CD8-positive, alpha-beta T cell (primary cell): ENCODE measurements at regions of chr3 and their contacts with region 1.

Region 1: GRCh38 chr3:105938101-105938500 is 69.3 kb upstream of the CBLB start:
- DNase-seq: no peak
- ATAC-seq: no peak
- H3K4me3 ChIP-seq: no peak overlapping the region
- H3K4me3 Mint-ChIP-seq: no peak overlapping the region
- H3K27ac ChIP-seq: no peak overlapping the region
- H3K27ac Mint-ChIP-seq: no peak overlapping the region
- H3K4me1 ChIP-seq: no peaks in the 10 kb centered on the region
- H3K4me1 Mint-ChIP-seq: peaks cover 2% of the 10 kb centered on the region
- H3K27me3 ChIP-seq: no peaks in the 10 kb centered on the region
- H3K27me3 Mint-ChIP-seq: no peaks in the 10 kb centered on the region
- CTCF ChIP-seq: no peak

Region 2: GRCh38 chr3:104961851-104962250 is 976.2 kb before region 1 on chr3:
- CTCF ChIA-PET with region 1: no interaction called
- POLR2A ChIA-PET with region 1: no interaction called
- intact Hi-C with region 1: no loop called
- DNase-seq: no peak
- ATAC-seq: no peak
- H3K4me3 ChIP-seq: no peak overlapping the region
- H3K4me3 Mint-ChIP-seq: no peak overlapping the region
- H3K27ac ChIP-seq: no peak overlapping the region
- H3K27ac Mint-ChIP-seq: no peak overlapping the region
- H3K4me1 ChIP-seq: no peaks in the 10 kb centered on the region
- H3K4me1 Mint-ChIP-seq: no peaks in the 10 kb centered on the region
- H3K27me3 ChIP-seq: no peaks in the 10 kb centered on the region
- H3K27me3 Mint-ChIP-seq: no peaks in the 10 kb centered on the region
- CTCF ChIP-seq: no peak

Region 3: DNA sequence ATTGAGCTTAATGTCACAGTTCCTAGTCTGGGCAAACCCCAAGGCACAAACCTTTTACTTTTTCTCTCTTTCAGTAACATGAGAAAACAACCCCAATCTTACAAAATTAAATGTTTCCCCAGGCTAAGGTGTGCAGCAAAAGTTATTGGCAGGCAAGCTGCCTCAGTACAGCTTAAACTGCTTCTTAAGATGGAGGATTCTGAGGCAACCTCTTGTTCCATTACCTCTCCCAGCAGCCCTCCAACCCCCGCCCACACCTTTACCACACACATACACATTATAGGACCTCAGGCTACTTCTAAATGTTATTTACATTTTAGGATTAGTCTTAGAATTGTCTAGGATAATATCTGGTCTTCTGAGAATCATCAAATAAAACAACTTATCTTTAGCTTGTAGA is 47.0 kb before region 1 on chr3:
- CTCF ChIA-PET with region 1: no interaction called
- POLR2A ChIA-PET with region 1: no interaction called
- intact Hi-C with region 1: loop called in 1 of 2 experiments (anchors 5 kb)
- DNase-seq: no peak
- ATAC-seq: no peak
- H3K4me3 ChIP-seq: no peak overlapping the region
- H3K4me3 Mint-ChIP-seq: no peak overlapping the region
- H3K27ac ChIP-seq: no peak overlapping the region
- H3K27ac Mint-ChIP-seq: no peak overlapping the region
- H3K4me1 ChIP-seq: peaks cover 5% of the 10 kb centered on the region
- H3K4me1 Mint-ChIP-seq: peaks cover 7% of the 10 kb centered on the region
- H3K27me3 ChIP-seq: no peaks in the 10 kb centered on the region
- H3K27me3 Mint-ChIP-seq: no peaks in the 10 kb centered on the region
- CTCF ChIP-seq: no peak